GM13976 (cell line): ENCODE measurements at regions of chr12 and their contacts with region 1.

Region 1: DNA sequence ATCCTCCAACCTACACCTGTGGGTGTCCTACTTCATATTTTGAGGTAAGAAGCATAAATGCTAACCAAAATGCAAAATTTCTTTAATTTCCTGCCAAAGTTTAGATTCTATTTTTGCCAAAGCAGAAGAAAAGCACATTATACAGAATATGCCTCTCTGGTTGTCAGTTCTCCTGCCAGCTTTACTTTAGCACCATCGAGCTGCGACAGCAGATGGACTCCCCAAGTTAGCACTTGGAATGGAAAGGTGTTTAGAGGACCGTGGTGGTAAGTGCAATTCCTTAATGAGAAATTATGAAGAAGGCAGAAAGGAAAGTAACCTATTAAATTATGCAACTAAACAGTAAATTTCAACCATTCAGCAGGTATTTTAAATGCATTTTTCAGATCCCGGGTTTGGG is 326.6 kb downstream of the RERGL start:
- DNase-seq: no peak
- CTCF ChIP-seq: no peak

Region 2: GRCh38 chr12:17304503-17305347 is 458.6 kb before region 1 on chr12:
- in situ Hi-C with region 1: no loop called
- DNase-seq: no peak
- CTCF ChIP-seq: no peak

Region 3: DNA sequence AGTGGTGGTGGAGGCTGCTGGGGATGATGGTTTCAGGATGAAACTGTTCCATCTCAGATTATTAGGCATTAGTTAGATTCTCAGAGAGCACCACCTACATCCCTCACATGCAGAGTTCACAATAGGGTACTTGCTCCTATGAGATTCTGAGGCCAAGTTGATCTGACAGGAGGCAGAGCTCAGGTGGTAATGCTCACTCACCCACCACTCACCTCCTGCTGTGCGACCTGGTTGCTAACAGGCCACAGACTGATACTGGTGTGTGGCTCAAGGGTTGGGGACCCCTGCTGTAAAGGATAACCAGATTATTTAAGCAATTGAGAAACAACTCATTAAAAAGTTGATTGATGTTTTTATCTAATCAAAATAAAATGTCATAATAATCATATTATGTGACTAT is 78.1 kb after region 1 on chr12:
- in situ Hi-C with region 1: loop called (anchors 10 kb)
- DNase-seq: no peak
- CTCF ChIP-seq: no peak